ENCODE measurements at regions of chr16 and their contacts with region 1.

Region 1: DNA sequence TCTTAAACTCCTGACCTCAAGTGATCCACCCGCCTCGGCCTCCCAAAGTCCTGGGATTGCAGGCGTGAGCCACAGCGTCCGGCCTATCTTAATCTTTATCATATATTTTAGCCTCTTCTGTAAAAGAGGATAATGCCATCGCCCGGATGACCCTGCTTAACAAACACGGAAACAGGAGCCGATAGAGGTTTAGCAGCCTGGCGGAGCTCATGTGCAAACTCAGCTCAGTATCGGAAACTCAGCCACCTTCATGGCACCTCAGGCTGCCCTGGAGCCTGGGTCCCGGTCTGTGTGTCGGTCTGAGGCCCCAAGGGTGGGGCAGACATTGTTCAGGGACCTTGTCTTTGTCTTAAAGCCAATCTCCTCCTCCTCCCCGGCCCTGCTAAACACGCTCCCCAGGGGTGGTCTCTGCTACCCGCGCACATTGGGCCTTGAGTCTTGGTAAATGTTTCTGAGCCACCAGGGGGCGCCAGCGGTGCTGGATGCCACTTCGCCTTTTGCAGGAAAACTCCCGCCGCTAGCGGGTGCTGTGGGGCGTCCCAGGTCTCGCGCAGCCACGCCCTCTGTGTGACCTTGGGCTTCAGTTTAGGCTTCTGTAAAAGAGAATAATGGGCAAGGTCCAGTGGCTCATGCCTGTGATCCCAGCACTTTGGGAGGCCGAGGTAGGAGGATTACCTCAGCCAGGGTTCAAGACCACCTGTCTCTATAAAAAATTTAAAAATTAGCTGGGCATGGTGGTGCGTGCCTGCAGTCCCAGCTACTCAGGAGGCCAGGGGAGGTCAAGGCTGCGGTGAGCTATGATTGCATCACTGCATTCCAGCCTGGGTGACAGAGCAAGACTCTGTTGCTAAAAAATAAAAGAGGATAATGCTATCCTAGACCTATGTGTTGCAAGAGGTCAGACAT is 2.7 kb downstream of the CETP start:
- DNase-seq: peak; percentile 96
- ATAC-seq: peak; percentile 51

Region 2: DNA sequence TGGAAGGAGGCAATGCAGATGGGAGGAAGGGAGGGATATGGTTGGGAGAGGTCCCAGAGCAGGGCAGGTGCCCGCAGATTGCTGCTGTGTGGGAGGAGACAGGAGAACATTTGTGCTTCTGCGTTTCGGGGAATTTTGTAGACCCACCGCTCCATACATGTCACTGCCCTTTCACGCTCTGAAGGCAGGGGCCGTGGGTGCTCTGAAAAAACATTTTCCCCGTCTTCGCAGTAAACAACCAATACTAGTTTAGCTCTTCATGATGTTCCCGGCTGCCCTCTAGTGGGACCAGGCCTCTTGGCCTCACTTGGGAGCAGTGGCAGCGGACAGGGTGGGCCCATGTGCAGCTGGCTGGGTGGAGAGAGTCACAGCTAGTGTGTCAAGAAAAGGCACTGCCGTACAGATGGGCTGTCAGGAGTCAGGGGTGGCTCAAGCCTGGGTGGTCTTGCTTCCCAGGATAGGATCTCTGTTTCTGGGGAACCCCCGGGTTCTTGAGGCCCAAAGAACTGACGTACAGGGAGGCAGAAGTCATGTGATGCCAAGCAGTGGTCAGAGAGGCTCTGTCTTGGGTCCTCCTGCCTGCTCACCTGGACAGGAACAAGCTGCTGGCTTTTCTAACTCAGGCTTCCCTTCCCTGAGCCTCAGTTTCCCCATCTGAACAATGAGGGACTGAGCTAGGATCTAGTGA is 81.3 kb after region 1 on chr16:
- intact Hi-C with region 1: loop called (anchors 1 kb)
- DNase-seq: peak; percentile 81
- ATAC-seq: peak; percentile 75

Region 3: DNA sequence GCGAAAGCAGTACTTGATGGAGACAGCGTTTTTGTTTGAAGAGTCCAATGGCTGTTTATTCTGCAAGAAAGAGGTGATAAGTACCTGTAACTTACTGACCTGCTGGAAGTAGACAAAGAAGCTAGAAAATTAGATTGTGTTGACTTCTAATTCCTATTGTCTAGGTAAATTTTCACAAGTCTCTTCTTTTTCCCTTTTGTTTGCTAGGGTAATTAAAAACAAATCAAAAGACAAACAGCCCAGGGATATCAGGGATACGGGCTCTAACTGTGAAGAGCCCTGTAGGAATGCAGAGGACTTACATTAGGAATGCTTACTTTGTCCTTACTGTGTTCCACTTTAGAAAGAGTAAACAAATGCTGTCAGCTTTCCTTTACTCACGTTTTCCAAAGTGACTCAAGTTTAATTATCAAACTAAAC is 214.3 kb after region 1 on chr16:
- intact Hi-C with region 1: no loop called
- DNase-seq: no peak
- ATAC-seq: no peak